Mammary epithelial cell (primary cell): ENCODE measurements at regions of chr1 and their contacts with region 1.

Region 1: DNA sequence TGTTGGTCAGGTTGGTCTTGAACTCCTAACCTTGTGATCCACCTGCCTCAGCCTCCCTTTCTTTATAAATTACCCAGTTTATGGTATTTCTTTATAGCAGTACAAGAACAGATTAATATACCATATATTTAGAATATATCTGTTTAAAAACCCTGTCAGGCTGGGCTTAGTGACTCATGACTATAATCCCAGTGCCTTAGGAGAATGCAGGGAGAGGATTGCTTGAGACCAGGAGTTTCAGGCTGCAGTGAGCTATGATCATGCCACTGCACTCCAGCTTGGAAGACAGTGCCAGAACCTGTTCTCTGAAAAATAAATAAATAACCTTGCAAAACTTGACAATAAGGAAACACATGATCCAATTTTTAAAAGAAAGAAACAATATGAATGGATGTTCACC is 43.9 kb downstream of the ZNF684 start:
- DNase-seq: no peak
- H3K4me3 ChIP-seq: no peak overlapping the region
- H3K27ac ChIP-seq: no peak overlapping the region
- H3K4me1 ChIP-seq: no peaks in the 10 kb centered on the region
- H3K27me3 ChIP-seq: no peaks in the 10 kb centered on the region
- CTCF ChIP-seq: no peak

Region 2: GRCh38 chr1:40337443-40337842 is 237.9 kb before region 1 on chr1:
- CTCF ChIA-PET with region 1: no interaction called
- dilution Hi-C with region 1: no loop called
- in situ Hi-C with region 1: no loop called
- intact Hi-C with region 1: no loop called
- DNase-seq: no peak
- H3K4me3 ChIP-seq: no peak overlapping the region
- H3K27ac ChIP-seq: no peak overlapping the region
- H3K4me1 ChIP-seq: peaks cover 3% of the 10 kb centered on the region
- H3K27me3 ChIP-seq: no peaks in the 10 kb centered on the region
- CTCF ChIP-seq: no peak

Region 3: DNA sequence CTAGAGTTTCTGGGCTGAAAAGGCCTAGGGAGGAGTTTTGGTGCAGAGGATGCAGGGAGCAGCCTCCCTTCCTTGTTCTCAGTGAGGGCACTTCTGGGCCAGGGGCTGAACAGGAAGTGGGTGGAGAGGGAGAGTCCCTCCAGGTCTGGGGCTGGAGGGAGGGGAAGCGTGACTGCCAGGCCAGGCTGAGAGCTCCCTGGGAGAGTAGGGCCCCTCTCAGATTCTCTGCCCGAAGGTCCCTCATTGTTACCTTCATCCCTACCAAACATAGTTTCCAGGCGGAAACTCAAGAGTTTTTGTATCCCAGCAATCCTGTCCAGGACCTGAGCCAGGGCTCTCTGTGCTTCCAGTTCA is 250.1 kb after region 1 on chr1:
- CTCF ChIA-PET with region 1: no interaction called
- dilution Hi-C with region 1: loop called (anchors 5 kb)
- in situ Hi-C with region 1: no loop called
- intact Hi-C with region 1: no loop called
- DNase-seq: no peak
- H3K4me3 ChIP-seq: no peak overlapping the region
- H3K27ac ChIP-seq: no peak overlapping the region
- H3K4me1 ChIP-seq: no peaks in the 10 kb centered on the region
- H3K27me3 ChIP-seq: no peaks in the 10 kb centered on the region
- CTCF ChIP-seq: no peak